ENCODE measurements at regions of chr3 and their contacts with region 1.

Region 1: DNA sequence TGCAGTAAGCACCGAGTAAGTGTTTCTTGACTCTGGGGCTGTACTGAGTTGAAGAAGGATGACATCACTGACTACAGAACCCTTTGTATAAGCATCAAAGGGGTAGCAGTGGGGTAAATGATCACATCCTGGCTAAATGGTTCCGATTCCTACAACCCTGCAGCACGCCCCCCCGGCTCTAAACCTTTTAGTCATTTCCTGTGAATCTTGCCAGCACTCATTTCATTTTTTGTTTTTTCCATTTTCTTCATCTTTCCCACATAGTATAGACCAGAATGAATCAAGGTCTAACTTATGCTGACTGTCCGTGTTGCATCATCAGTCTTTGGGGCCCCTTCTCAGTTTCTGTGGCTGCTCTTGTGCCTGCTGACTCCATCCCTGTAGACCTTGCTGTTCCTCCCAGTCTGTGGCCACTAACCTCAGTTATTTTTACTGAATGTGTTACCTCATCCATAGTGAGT is 383.1 kb upstream of the TPRG1 start:
- DNase-seq: peak; percentile 89
- ATAC-seq: peak; percentile 97
- H3K4me3 Mint-ChIP-seq: no peak overlapping the region
- H3K27ac Mint-ChIP-seq: no peak overlapping the region
- H3K4me1 Mint-ChIP-seq: peaks cover 2% of the 10 kb centered on the region
- H3K27me3 Mint-ChIP-seq: no peaks in the 10 kb centered on the region

Region 2: GRCh38 chr3:187648177-187648576 is 1140.5 kb before region 1 on chr3:
- CTCF ChIA-PET with region 1: no interaction called
- POLR2A ChIA-PET with region 1: no interaction called
- intact Hi-C with region 1: no loop called
- DNase-seq: no peak
- ATAC-seq: no peak
- H3K4me3 Mint-ChIP-seq: no peak overlapping the region
- H3K27ac Mint-ChIP-seq: no peak overlapping the region
- H3K4me1 Mint-ChIP-seq: no peaks in the 10 kb centered on the region
- H3K27me3 Mint-ChIP-seq: peaks cover 38% of the 10 kb centered on the region

Region 3: GRCh38 chr3:187745201-187746058 is 1043.2 kb before region 1 on chr3 and contains the start of gene BCL6:
- CTCF ChIA-PET with region 1: interaction called, 6 read pairs
- POLR2A ChIA-PET with region 1: interaction called, 5 read pairs
- intact Hi-C with region 1: loop called (anchors 1 kb)
- DNase-seq: peak; percentile 92
- ATAC-seq: peak; percentile 50
- H3K4me3 Mint-ChIP-seq: peak within 1 kb of the TSS; percentile 91
- H3K27ac Mint-ChIP-seq: peak within 1 kb of the TSS; percentile 99
- H3K4me1 Mint-ChIP-seq: peaks cover 63% of the 10 kb centered on the region
- H3K27me3 Mint-ChIP-seq: no peaks in the 10 kb centered on the region
- total RNA-seq, gene BCL6: 42.9 to 52.8 TPM

Region 4: GRCh38 chr3:188061133-188061532 is 727.5 kb before region 1 on chr3:
- CTCF ChIA-PET with region 1: interaction called, 3 read pairs
- POLR2A ChIA-PET with region 1: no interaction called
- intact Hi-C with region 1: loop called in 1 of 2 experiments (anchors 1 kb)
- DNase-seq: peak; percentile 76
- ATAC-seq: peak; percentile 98
- H3K4me3 Mint-ChIP-seq: peak overlapping the region; percentile 25
- H3K27ac Mint-ChIP-seq: peak overlapping the region; percentile 77
- H3K4me1 Mint-ChIP-seq: peaks cover 35% of the 10 kb centered on the region
- H3K27me3 Mint-ChIP-seq: no peaks in the 10 kb centered on the region

Region 5: DNA sequence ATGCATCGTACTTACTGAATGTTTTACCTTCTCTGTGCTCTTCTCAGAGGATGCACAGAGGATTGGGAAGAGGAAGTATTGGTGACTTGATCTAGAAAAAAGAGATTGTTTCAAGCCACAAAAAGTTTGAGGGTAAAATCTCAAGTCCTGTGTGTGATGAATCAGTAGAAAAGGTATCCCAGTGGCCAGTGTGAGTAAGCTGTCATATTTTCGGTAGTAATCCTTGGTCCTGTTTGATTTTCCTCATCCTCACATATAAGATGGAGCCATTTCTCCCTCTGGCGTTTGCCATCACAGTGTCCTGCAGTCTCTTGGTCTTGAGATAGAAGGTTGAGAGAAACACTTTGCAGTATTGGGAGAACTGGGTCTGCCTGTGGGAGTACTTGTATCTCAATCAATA is 467.9 kb before region 1 on chr3:
- CTCF ChIA-PET with region 1: no interaction called
- POLR2A ChIA-PET with region 1: no interaction called
- intact Hi-C with region 1: loop called (anchors 1 to 10 kb)
- DNase-seq: no peak
- ATAC-seq: no peak
- H3K4me3 Mint-ChIP-seq: no peak overlapping the region
- H3K27ac Mint-ChIP-seq: no peak overlapping the region
- H3K4me1 Mint-ChIP-seq: peaks cover 63% of the 10 kb centered on the region
- H3K27me3 Mint-ChIP-seq: peaks cover 3% of the 10 kb centered on the region

Region 6: DNA sequence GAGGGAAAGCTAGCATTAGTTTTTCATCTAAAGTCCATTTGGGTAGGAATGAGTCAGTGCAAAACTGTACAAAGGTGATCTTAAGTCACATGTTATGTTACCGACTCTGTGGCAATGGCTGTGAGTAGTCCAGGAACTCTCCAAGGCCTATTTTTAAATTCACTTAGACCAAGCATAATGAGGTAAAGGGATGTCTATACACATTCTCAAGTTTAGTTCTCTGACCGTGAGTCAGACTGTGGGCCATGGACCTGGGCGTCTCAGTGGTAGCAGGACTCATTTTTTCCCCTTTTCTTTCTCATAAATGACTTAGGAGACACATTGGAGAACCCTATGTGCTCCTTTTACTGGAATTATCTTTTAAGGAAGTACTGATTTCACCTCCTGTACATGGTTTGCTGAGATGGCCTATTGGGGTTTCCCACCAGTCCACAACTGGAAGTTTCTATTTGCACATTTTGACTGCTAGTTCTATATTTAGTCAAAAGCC is 105.6 kb before region 1 on chr3:
- CTCF ChIA-PET with region 1: no interaction called
- POLR2A ChIA-PET with region 1: no interaction called
- intact Hi-C with region 1: loop called in 1 of 2 experiments (anchors 1 kb)
- DNase-seq: peak; percentile 69
- ATAC-seq: peak; percentile 97
- H3K4me3 Mint-ChIP-seq: no peak overlapping the region
- H3K27ac Mint-ChIP-seq: no peak overlapping the region
- H3K4me1 Mint-ChIP-seq: peaks cover 41% of the 10 kb centered on the region
- H3K27me3 Mint-ChIP-seq: no peaks in the 10 kb centered on the region

Region 7: GRCh38 chr3:188914552-188914951 is 125.9 kb after region 1 on chr3:
- CTCF ChIA-PET with region 1: interaction called, 7 read pairs
- POLR2A ChIA-PET with region 1: interaction called, 11 read pairs
- intact Hi-C with region 1: loop called (anchors 1 kb)
- DNase-seq: peak; percentile 42
- ATAC-seq: peak; percentile 82
- H3K4me3 Mint-ChIP-seq: no peak overlapping the region
- H3K27ac Mint-ChIP-seq: peak overlapping the region; percentile 90
- H3K4me1 Mint-ChIP-seq: peaks cover 46% of the 10 kb centered on the region
- H3K27me3 Mint-ChIP-seq: peaks cover 3% of the 10 kb centered on the region

Measured in activated CD4-positive, alpha-beta T cell treated with anti-CD3 and anti-CD28 coated beads for 36 hours (primary cell).